ENCODE measurements at regions of chr10 and their contacts with region 1.

Region 1: DNA sequence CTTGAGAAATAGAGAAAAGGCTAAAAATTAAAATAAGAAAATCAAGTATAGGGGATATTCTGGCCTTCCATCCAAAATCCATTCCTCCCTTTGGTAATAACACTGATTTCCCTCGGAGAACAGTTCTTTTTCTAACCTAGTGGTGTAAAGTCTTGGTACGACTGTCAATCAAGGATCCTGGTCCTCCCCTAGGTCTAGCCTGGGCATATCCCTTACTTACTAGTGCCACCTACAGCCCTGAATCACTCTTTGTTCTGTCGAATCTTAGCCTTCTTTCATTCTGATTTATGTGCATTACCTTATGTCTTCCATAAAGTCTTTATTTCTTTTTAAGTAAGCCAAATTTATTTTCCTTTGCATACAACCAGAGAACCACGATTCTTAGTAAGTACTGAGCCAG is 298.7 kb upstream of the LRRTM3 start:
- DNase-seq: peak; percentile 61
- H3K4me3 ChIP-seq: no peak overlapping the region
- H3K27ac ChIP-seq: no peak overlapping the region
- H3K4me1 ChIP-seq: peaks cover 13% of the 10 kb centered on the region
- H3K27me3 ChIP-seq: no peaks in the 10 kb centered on the region
- CTCF ChIP-seq: peak; percentile 55 to 69

Region 2: DNA sequence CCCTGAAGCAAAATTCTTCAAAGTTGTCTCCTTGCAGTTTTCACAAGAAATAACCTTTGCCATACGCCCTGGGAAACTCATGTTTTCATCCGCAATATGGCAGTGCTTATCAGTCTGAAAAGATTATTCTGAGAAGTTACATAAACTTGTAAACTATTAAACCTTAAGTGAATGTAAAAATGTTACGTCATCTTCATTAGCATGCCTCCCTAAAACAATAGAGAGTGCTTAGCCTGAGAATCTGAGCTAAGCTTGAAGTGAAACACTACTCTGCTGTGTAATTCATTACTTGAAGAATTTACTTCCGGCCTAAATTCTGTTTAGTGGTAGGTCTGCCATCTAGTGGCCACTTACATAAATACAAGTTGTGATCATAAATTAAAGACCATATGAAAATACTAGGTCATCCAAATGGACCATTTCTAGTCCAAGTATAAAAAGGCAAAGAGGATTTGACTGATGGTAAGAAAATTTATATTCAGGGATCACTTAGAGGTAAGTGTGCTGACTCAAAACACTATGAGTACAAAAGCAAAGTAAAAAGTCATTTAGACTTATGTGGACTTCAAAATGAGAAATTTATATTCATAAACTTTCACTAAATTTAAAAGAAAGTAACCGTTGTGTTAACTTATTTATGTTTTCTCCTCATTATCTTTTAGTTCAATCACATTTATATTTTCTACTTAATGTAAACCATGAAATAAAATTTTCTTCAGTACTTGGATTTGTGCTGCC is 446.4 kb before region 1 on chr10:
- CTCF ChIA-PET with region 1: no interaction called
- dilution Hi-C with region 1: no loop called
- in situ Hi-C with region 1: no loop called
- intact Hi-C with region 1: loop called (anchors 10 kb)
- DNase-seq: peak; percentile 40
- H3K4me3 ChIP-seq: no peak overlapping the region
- H3K27ac ChIP-seq: no peak overlapping the region
- H3K4me1 ChIP-seq: no peaks in the 10 kb centered on the region
- H3K27me3 ChIP-seq: no peaks in the 10 kb centered on the region
- CTCF ChIP-seq: peak; percentile 53 to 60

Region 3: GRCh38 chr10:66307826-66308225 is 319.3 kb before region 1 on chr10:
- CTCF ChIA-PET with region 1: no interaction called
- dilution Hi-C with region 1: no loop called
- in situ Hi-C with region 1: no loop called
- intact Hi-C with region 1: loop called (anchors 5 kb)
- DNase-seq: no peak
- H3K4me3 ChIP-seq: no peak overlapping the region
- H3K27ac ChIP-seq: no peak overlapping the region
- H3K4me1 ChIP-seq: no peaks in the 10 kb centered on the region
- H3K27me3 ChIP-seq: no peaks in the 10 kb centered on the region
- CTCF ChIP-seq: peak in 1 of 2 donors; percentile 26

Region 4: DNA sequence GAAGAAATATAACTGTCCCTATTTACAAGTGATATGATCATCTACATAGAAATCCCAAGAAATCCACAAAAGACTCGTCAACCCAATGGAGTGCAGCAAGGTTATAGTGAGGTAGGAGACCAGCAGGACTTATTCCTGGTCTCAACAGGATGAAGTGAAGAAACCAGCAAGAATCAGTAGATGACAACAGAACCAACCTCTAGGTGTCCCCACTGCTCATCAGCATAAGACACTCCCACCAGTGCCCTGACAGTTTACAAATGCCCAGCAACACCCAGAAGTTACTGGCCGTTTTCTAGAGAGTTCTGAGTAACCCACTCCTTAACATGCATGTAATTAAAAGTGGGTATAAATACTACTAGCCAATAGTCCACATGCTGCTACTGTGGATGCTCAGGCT is 171.9 kb before region 1 on chr10:
- CTCF ChIA-PET with region 1: no interaction called
- dilution Hi-C with region 1: no loop called
- in situ Hi-C with region 1: no loop called
- intact Hi-C with region 1: loop called (anchors 2 kb)
- DNase-seq: peak; percentile 2
- H3K4me3 ChIP-seq: no peak overlapping the region
- H3K27ac ChIP-seq: no peak overlapping the region
- H3K4me1 ChIP-seq: no peaks in the 10 kb centered on the region
- H3K27me3 ChIP-seq: peaks cover 1% of the 10 kb centered on the region
- CTCF ChIP-seq: peak; percentile 30 to 63

Region 5: GRCh38 chr10:66586073-66586472 is 41.1 kb before region 1 on chr10:
- CTCF ChIA-PET with region 1: no interaction called
- dilution Hi-C with region 1: no loop called
- in situ Hi-C with region 1: no loop called
- intact Hi-C with region 1: loop called (anchors 2 kb)
- DNase-seq: peak; percentile 19
- H3K4me3 ChIP-seq: no peak overlapping the region
- H3K27ac ChIP-seq: no peak overlapping the region
- H3K4me1 ChIP-seq: no peaks in the 10 kb centered on the region
- H3K27me3 ChIP-seq: peaks cover 2% of the 10 kb centered on the region
- CTCF ChIP-seq: peak; percentile 48 to 55

Region 6: DNA sequence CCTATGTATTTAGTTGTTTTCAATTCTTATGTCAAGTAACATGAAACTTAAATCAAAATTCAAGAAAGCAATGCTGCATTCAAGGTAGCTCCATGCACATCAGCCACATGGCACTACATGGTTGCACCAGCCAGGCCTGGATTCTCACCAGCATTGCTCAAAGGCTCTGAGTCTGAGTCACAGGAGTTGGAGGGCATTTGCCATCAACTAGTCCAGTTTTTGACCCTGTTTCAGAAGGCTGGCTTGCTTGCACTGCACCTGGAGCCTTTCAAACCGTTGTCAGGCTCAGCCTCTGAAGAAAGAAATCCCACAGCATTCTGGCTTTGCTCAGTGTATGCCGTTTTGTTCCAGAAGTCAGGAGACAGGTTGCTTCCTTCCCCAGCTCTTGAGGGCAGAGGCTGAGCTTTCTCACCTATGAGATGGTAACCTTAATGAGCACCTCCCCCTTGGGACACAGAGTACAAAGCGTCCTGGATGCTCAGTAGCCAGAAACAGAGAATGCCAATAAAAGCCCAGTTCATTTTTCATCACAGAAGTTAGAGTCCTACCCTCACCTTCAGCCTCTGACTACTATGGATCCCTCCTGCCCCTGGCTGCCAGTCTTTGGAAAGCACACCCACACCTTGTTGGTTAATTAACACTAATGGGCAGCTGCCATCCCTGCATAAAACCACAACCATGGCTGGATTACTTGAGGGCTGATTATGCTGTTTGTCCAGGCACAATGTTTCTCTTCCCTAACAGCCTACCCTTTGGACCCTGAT is 10.3 kb after region 1 on chr10:
- CTCF ChIA-PET with region 1: no interaction called
- dilution Hi-C with region 1: no loop called
- in situ Hi-C with region 1: no loop called
- intact Hi-C with region 1: no loop called
- DNase-seq: peak; percentile 28
- H3K4me3 ChIP-seq: no peak overlapping the region
- H3K27ac ChIP-seq: no peak overlapping the region
- H3K4me1 ChIP-seq: peaks cover 14% of the 10 kb centered on the region
- H3K27me3 ChIP-seq: no peaks in the 10 kb centered on the region
- CTCF ChIP-seq: no peak

Region 7: GRCh38 chr10:66747451-66747850 is 120.3 kb after region 1 on chr10:
- CTCF ChIA-PET with region 1: no interaction called
- dilution Hi-C with region 1: no loop called
- in situ Hi-C with region 1: no loop called
- intact Hi-C with region 1: loop called (anchors 1 kb)
- DNase-seq: peak; percentile 94
- H3K4me3 ChIP-seq: no peak overlapping the region
- H3K27ac ChIP-seq: peak overlapping the region; percentile 91
- H3K4me1 ChIP-seq: peaks cover 20% of the 10 kb centered on the region
- H3K27me3 ChIP-seq: no peaks in the 10 kb centered on the region
- CTCF ChIP-seq: no peak

Region 8: GRCh38 chr10:66925896-66926715 is 298.9 kb after region 1 on chr10 and contains the start of gene LRRTM3:
- CTCF ChIA-PET with region 1: no interaction called
- dilution Hi-C with region 1: no loop called
- in situ Hi-C with region 1: no loop called
- intact Hi-C with region 1: loop called (anchors 5 kb)
- DNase-seq: peak; percentile 70
- H3K4me3 ChIP-seq: no peak within 1 kb of the TSS
- H3K27ac ChIP-seq: no peak within 1 kb of the TSS
- H3K4me1 ChIP-seq: no peaks in the 10 kb centered on the region
- H3K27me3 ChIP-seq: peaks cover 17% of the 10 kb centered on the region
- CTCF ChIP-seq: peak; percentile 79
- total RNA-seq, gene LRRTM3: not detected

Measured in mammary epithelial cell (primary cell).